Common myeloid progenitor, CD34-positive (primary cell): ENCODE measurements at regions of chr1 and their contacts with region 1.

Region 1: GRCh38 chr1:154878371-154879022 is 8.4 kb upstream of the KCNN3 start:
- DNase-seq: peak; percentile 52 to 73 (median 65)
- H3K4me3 ChIP-seq: no peak overlapping the region
- H3K27ac ChIP-seq: no peak overlapping the region
- H3K4me1 ChIP-seq: peaks cover 0 to 10% (median 6%) of the 10 kb centered on the region in 4 experiments
- H3K27me3 ChIP-seq: peaks cover 0 to 2% (median 0%) of the 10 kb centered on the region in 5 experiments

Region 2: GRCh38 chr1:154669464-154670282 is 208.8 kb before region 1 on chr1:
- CTCF ChIA-PET with region 1: interaction called, 15 read pairs
- POLR2A ChIA-PET with region 1: no interaction called
- DNase-seq: peak; percentile 87 to 91 (median 89)
- H3K4me3 ChIP-seq: no peak overlapping the region
- H3K27ac ChIP-seq: no peak overlapping the region
- H3K4me1 ChIP-seq: no peaks in the 10 kb centered on the region
- H3K27me3 ChIP-seq: no peaks in the 10 kb centered on the region

Region 3: DNA sequence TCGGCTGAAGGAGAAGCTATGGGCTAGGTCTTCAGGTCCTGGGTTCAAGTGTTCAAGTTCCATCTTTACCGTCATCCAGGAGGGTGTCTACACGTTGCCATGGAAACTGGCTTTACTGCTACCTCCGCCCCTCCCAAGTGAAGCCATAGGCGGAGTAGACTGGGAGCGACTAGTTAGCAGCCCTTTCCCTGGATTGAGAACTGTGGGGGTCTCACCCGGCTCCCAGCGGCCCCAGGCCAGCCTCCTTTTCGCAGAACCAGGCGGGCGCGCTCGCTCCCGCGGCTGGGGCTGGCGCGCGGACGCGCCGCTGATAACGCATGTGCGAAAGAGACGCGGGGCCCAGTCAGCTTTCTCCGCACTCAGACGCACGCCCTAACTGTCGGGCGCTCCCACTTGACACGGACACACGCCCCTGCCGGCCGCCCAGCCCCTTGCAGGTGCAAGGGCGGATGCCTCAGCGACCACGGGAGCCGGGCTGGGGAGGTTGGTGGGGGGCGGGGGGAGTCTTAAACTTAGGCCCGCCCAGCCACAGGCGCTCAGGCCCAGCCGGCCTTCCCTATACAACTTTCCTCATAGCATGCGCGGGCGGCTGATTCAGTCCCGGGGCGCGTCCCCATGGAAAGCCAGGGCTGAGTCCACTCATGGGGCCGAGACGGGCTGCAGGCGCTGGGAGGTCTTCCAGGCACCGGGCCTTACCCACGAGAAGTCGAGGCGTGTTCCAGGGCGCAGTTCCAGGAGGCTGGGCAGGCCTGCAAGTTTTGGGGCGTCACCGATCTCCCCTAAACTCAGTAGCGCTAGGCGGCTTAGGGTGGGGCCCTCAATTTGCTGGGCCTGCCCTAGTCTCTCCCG is 192.4 kb after region 1 on chr1:
- CTCF ChIA-PET with region 1: no interaction called
- POLR2A ChIA-PET with region 1: no interaction called
- DNase-seq: peak; percentile 91 to 95 (median 94)
- H3K4me3 ChIP-seq: peak overlapping the region in 6 of 7 experiments; percentile 28 to 75 (median 44)
- H3K27ac ChIP-seq: peak overlapping the region in 1 of 2 experiments; percentile 43
- H3K4me1 ChIP-seq: peaks cover 0 to 36% (median 26%) of the 10 kb centered on the region in 4 experiments
- H3K27me3 ChIP-seq: no peaks in the 10 kb centered on the region